Heart left ventricle (tissue), 16 donors: ENCODE measurements at regions of chr9 and their contacts with region 1.

Region 1: DNA sequence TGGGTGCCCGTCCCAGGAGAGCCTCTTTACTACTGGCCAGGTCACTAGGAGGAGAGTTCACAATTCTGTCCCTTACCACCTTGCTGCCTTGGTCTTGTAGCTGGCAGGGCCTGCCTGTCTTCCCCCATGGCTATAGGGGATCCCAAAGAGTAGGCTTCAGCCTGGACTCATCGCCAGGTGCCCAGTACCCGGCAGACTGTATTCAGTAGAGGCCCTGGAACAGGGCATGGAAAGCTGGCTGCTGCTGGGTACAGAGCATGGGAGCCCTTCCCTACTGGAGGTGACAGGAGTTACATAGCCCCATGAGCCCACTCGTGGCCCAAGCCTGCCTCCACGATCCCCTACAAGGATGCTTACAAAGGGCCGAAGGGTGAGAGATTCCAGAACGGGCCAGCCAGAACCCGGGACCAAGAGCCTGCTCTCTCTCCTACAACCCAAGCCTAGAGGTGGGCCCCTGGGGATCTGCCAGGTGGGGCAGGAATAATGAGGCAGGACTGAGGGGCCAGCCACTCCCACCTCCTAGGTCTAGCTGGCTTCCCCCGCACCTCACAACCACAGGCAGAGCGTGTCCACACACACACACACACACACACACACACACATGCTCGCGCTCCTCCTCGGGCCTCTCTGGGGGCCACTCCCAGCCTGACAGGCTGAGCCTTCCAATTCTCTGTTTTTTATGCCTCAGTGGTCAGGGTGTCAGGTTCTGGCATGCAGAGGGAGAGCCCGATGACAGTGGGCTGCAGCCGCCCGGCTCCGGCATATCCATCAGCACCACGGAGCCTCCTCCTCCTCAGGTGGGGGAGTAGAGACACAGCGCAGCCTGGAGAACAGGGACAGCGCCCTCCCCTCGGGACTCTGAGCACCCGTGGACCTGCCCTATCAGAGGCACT is 186.0 kb downstream of the PAX5 start:
- DNase-seq: no peak
- ATAC-seq: no peak
- H3K4me3 ChIP-seq: no peak overlapping the region
- H3K27ac ChIP-seq: no peak overlapping the region
- H3K4me1 ChIP-seq: no peaks in the 10 kb centered on the region
- H3K27me3 ChIP-seq: peaks cover 0 to 33% (median 0%) of the 10 kb centered on the region in 9 donors
- CTCF ChIP-seq: no peak
- POLR2A ChIP-seq: no peak

Region 2: GRCh38 chr9:35341585-35341984 is 1506.4 kb before region 1 on chr9:
- intact Hi-C with region 1: no loop called
- DNase-seq: peak; percentile 60 to 86 (median 76)
- ATAC-seq: peak; percentile 87 to 98 (median 98)
- H3K4me3 ChIP-seq: peak overlapping the region in 8 of 12 donors; percentile 16 to 43 (median 28)
- H3K27ac ChIP-seq: peak overlapping the region in 10 of 12 donors; percentile 32 to 60 (median 43)
- H3K4me1 ChIP-seq: peaks cover 2 to 49% (median 20%) of the 10 kb centered on the region in 12 donors
- H3K27me3 ChIP-seq: no peaks in the 10 kb centered on the region
- CTCF ChIP-seq: no peak
- POLR2A ChIP-seq: no peak

Region 3: DNA sequence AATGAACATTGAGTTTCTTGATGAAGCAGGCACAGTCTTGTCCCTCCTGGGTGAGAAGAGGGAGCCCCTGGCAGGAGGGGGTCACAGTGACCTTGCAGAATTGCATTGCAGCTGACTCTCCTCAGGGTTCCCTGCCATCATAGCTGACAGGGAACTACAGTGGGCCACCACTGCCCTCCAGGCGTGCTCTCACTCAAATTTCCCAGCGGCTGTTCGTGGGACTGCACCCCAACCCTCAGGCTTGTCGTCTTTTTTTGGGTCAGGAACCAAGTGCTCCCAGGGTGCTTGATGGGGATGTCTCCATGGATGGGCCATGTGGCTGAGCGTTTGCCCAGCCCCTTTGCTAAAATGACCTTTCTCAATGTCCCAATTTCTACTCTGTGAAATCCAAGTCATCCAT is 59.5 kb before region 1 on chr9:
- intact Hi-C with region 1: loop called in 1 of 10 experiments (anchors 10 kb)
- DNase-seq: no peak
- ATAC-seq: no peak
- H3K4me3 ChIP-seq: no peak overlapping the region
- H3K27ac ChIP-seq: no peak overlapping the region
- H3K4me1 ChIP-seq: no peaks in the 10 kb centered on the region
- H3K27me3 ChIP-seq: peaks cover 0 to 34% (median 4%) of the 10 kb centered on the region in 9 donors
- CTCF ChIP-seq: peak in 6 of 12 donors; percentile 11 to 34 (median 18)
- POLR2A ChIP-seq: no peak

Region 4: GRCh38 chr9:36974731-36975130 is 126.7 kb after region 1 on chr9:
- intact Hi-C with region 1: no loop called
- DNase-seq: peak in 1 of 5 donors; percentile 7
- ATAC-seq: no peak
- H3K4me3 ChIP-seq: no peak overlapping the region
- H3K27ac ChIP-seq: no peak overlapping the region
- H3K4me1 ChIP-seq: no peaks in the 10 kb centered on the region
- H3K27me3 ChIP-seq: peaks cover 0 to 52% (median 9%) of the 10 kb centered on the region in 9 donors
- CTCF ChIP-seq: no peak
- POLR2A ChIP-seq: no peak